ENCODE measurements at regions of chr2 and their contacts with region 1.

Region 1: DNA sequence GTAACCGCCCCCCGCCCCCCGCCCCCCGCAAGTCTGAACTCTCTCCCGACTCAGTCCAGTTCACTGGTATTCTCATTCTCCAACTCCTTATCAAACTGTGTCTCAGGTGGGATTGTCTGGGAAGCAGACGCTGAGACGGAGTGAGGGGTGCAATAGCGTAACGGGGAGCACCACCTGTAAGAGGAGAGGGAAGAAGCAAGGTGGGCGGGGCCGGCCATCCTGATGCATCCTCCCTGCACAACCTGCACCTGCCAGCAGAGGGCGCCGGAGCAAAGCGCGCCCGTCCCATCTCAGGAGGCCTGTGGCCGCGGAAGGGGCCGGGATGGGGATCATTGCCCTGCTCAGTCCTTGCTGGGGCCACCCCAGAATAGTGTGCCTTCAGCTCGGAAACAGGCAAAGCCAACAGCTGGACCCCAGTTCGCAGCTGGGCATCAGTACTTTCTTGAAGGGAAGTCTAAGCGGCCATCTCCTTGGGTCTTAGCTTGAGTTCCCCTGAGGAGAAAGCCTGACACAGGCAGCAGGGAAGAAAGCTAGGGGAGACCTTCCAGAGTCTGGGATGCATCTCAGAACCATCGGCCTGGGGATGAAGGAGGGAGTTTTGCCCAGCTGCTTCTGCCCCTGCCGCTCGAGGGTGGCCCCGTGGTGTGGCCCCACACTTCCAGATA is 208.0 kb downstream of the TFCP2L1 start:
- DNase-seq: peak; percentile 81
- CTCF ChIP-seq: peak; percentile 96

Region 2: GRCh38 chr2:121052521-121052920 is 24.5 kb before region 1 on chr2:
- CTCF ChIA-PET with region 1: interaction called, 12 read pairs
- POLR2A ChIA-PET with region 1: no interaction called
- DNase-seq: no peak
- CTCF ChIP-seq: no peak

Region 3: DNA sequence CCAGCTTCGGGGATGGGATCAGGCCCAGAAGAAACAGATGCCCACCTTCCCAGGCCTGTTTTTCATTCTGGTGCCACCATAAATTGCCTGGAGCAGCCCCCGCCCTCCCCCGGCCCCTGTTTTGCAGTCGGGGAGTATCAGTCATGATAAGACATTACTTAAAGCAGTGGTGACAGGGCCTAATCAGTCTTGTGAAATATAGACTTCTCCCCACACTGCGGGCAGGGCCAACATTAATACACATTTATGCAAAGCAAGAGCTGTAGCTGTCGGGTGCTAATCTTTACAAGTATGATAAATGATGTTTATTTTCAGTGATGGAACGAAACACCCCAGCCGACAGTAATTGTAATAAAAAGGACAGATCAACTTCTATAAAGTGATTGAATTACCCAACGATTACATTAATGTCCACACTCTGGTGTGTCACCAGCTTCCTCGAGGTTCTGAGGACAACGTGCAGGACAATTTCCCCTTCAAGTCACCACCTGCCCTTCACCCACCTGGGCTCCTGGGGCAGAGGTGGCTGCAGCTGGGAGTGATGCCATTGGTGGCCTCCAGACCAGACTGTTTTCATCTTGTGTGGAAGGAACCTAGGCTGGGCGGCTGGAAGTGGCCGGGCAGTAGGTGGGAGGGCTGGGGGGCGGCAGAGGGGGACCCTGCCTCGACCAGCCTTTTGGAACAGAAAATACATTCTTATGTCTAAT is 18.0 kb before region 1 on chr2:
- CTCF ChIA-PET with region 1: interaction called, 13 read pairs
- POLR2A ChIA-PET with region 1: no interaction called
- DNase-seq: no peak
- CTCF ChIP-seq: no peak

Region 4: DNA sequence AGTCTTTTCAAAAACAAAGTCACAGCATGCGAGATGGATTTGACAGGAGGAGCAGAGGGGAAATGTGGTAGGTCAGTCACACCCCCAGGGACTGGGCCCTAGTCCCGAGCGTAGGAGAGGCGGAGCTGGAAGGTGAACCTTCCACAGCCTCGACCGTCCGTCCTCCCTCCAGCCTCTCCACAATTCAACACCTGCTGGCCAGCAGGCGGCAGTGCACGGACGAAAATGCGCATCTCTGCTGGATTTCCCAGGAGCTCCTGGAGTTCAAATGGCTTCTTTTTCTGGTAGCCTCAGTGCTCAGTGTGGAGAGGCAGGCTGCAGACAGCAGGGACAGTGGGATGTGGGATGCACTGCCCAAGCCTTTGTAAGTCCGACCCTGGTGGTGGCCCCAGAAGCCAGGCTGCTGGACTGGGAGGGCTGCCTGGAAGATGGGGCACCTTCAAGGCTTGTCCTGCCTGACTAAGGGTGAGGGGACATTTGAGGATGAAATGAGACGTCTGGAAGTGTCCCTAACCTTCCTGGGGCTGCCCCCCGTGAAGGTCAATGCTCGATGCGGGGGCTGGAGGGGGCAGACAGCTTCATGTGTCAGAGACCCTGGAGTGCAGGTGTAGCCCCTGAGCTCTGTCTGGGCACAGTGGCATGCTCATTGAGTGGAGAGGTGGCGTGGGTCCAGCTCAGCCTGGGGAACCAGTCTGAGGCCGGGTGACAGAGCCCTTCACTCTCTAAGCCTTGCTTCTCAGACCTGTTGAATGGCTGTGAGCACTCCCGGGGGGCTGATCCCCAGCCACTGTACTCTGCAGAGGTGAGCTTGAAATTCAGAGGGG is 18.5 kb after region 1 on chr2:
- CTCF ChIA-PET with region 1: interaction called, 174 read pairs
- POLR2A ChIA-PET with region 1: no interaction called
- DNase-seq: peak; percentile 58
- CTCF ChIP-seq: peak; percentile 76